Motor neuron (in vitro differentiated cells): ENCODE measurements at regions of chr17 and their contacts with region 1.

Region 1: GRCh38 chr17:31842183-31843069 is 16.6 kb downstream of the COPRS start:
- ATAC-seq: peak; percentile 91 to 99 (median 98)
- H3K4me3 ChIP-seq: peak overlapping the region in 1 of 5 donors; percentile 2
- H3K27ac ChIP-seq: no peak overlapping the region
- H3K4me1 ChIP-seq: peaks cover 0 to 3% of the 10 kb centered on the region in 2 donors

Region 2: DNA sequence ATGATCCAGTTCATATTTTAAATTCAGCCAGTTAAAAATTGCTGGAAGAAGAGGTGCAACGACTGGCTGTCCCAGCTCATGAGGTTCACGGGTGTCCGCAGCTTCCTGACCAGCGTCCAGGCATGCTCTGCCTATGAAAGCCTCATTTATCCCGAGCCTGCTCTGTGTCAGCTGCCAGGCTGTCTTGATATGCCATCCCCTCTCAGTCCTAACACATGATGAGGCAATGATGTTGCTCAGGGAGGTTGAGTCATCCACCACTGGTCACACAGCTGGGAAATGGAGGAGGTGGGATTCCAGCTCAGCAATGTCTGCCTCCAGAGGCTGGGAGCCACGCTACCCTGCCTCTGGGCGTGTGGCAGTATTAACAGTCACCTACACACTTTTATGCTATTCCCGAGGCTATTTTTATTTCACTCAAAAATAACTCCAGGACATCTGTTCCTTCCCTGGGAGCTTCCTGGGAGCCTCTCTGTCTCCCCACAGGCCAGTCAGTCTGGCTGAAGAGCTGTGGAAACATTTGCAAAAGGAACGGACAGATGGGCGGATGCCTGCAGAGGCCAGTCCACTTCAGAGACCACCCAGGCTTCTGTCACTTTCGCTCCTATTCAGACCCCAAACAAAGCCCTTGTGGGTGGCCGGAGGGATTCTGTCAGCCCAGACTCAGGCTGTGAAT is 428.4 kb before region 1 on chr17:
- in situ Hi-C with region 1: loop called in 1 of 9 experiments (anchors 25 kb)
- ATAC-seq: peak; percentile 57 to 90 (median 78)
- H3K4me3 ChIP-seq: no peak overlapping the region
- H3K27ac ChIP-seq: peak overlapping the region in 1 of 2 donors; percentile 54
- H3K4me1 ChIP-seq: peaks cover 40 to 74% of the 10 kb centered on the region in 2 donors

Region 3: GRCh38 chr17:31425282-31426040 is 417.0 kb before region 1 on chr17:
- in situ Hi-C with region 1: loop called in 4 of 9 experiments (anchors 25 kb)
- ATAC-seq: peak in 6 of 8 experiments; percentile 49 to 90 (median 83)
- H3K4me3 ChIP-seq: no peak overlapping the region
- H3K27ac ChIP-seq: peak overlapping the region; percentile 82 to 83
- H3K4me1 ChIP-seq: peaks cover 11 to 15% of the 10 kb centered on the region in 2 donors

Region 4: GRCh38 chr17:31549525-31550388 is 292.7 kb before region 1 on chr17:
- in situ Hi-C with region 1: loop called in 4 of 9 experiments (anchors 10 to 25 kb)
- ATAC-seq: peak; percentile 83 to 92 (median 88)
- H3K4me3 ChIP-seq: peak overlapping the region; percentile 61 to 87 (median 77)
- H3K27ac ChIP-seq: peak overlapping the region; percentile 47 to 81
- H3K4me1 ChIP-seq: peaks cover 4 to 5% of the 10 kb centered on the region in 2 donors